Mammary epithelial cell (primary cell): ENCODE measurements at regions of chr15 and their contacts with region 1.

Region 1: DNA sequence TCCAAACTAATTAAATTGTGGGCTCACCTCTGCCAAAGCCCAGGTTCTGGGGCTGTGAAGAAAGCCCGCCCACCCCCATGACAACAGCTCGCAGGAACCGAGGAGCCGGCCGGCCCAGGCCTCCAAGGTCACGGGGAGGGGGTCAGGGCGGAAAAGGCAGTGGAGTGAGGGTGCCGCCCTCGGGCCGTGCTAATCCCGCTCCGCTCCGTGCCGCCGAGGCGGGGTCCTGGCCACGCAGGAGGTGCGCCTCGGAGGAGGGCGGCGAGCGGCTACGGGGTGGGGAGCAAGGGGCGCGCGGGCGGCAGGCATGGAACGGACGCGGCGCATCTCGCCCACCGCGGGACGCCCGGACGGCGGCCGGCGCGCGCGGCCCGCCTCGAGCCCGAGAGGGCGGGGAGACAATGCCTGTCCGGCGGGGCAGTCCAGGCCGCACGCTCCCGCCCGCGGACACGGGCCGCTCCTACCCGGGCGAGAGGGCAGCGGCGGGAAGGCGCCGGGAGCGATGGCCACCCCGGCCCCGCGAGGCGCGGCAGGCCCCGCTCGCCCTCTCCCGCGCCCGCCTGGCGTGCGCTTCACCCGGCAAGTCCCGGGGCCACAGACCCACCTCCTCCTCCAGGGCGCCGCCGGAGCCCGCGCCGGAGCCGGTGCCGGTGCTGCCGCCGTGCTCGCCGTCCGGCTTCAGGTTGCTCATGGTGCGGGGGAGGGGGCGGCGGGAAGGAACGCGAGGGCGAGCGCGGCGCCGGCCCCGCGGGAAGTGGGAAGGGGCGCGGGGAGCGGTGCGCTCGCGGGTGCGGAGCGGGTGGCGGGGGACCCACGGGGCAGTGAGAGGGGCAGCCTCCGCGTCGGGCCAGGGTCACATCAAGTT is 528 bp downstream of the RBPMS2 start:
- DNase-seq: no peak
- H3K4me3 ChIP-seq: peak overlapping the region in 2 of 3 experiments; percentile 25 to 44
- H3K27ac ChIP-seq: no peak overlapping the region
- H3K4me1 ChIP-seq: peaks cover 3% of the 10 kb centered on the region
- H3K27me3 ChIP-seq: peaks cover 24% of the 10 kb centered on the region
- CTCF ChIP-seq: no peak

Region 2: DNA sequence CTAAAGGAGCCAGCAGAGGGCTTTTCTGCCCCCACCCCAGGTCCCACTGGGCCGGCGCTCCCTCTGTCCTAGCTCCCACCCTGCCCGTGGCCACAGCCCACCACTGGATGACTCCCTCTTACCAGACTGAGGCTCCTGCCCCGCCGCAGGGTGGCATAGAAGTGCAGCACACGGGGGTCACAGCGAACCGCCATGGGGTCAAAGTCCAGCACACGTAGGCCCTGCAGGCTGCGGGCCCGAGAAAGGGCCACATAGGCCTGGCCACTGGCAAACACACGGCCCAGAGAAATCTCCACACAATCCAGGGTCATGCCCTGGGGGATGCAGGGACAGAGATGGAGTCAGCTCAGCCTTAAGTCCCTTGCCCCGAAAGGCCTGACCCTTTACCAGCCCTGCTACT is 41.6 kb after region 1 on chr15:
- CTCF ChIA-PET with region 1: no interaction called
- dilution Hi-C with region 1: loop called (anchors 5 kb)
- in situ Hi-C with region 1: no loop called
- intact Hi-C with region 1: no loop called
- DNase-seq: no peak
- H3K4me3 ChIP-seq: no peak overlapping the region
- H3K27ac ChIP-seq: no peak overlapping the region
- H3K4me1 ChIP-seq: no peaks in the 10 kb centered on the region
- H3K27me3 ChIP-seq: no peaks in the 10 kb centered on the region
- CTCF ChIP-seq: no peak